MCF 10A (cell line): ENCODE measurements at regions of chr9 and their contacts with region 1.

Region 1: DNA sequence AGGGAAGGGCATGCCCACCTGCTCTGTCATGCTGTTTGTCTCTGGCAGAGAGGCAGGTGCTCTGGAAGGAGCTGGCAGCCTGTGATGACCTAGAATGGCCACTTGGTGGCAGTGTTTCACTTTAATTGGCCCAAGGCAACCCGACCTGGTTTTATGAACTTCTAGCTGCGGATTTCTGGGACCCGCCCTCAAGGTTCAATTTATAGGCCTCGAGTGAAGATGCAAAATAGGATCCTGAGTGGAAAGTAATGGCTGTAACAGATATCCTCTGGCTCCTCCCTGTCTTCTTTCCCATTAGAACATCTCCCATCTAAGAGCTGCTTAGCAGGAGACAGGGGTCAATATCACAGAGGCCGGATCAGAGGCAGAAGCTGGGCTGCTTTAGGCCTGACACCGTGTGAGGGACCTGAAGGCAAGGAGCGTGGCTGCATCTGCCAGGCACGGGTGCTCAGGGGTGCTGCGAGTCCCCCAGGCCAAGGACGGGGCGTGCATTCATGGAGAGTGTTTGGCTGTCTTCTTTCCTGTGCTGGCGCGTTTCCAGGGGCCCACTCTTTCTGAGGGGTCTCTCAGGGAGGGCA is 56.7 kb upstream of the SLC28A3 start:
- DNase-seq: peak; percentile 78
- H3K4me3 Mint-ChIP-seq: no peak overlapping the region
- H3K27ac Mint-ChIP-seq: no peak overlapping the region
- H3K4me1 Mint-ChIP-seq: no peaks in the 10 kb centered on the region
- H3K27me3 Mint-ChIP-seq: no peaks in the 10 kb centered on the region
- CTCF ChIP-seq: peak; percentile 87

Region 2: GRCh38 chr9:84463272-84463671 is 66.0 kb after region 1 on chr9:
- CTCF ChIA-PET with region 1: interaction called, 3 read pairs
- POLR2A ChIA-PET with region 1: interaction called, 3 read pairs
- intact Hi-C with region 1: loop called (anchors 1 kb)
- DNase-seq: no peak
- H3K4me3 Mint-ChIP-seq: no peak overlapping the region
- H3K27ac Mint-ChIP-seq: no peak overlapping the region
- H3K4me1 Mint-ChIP-seq: no peaks in the 10 kb centered on the region
- H3K27me3 Mint-ChIP-seq: no peaks in the 10 kb centered on the region
- CTCF ChIP-seq: no peak

Region 3: DNA sequence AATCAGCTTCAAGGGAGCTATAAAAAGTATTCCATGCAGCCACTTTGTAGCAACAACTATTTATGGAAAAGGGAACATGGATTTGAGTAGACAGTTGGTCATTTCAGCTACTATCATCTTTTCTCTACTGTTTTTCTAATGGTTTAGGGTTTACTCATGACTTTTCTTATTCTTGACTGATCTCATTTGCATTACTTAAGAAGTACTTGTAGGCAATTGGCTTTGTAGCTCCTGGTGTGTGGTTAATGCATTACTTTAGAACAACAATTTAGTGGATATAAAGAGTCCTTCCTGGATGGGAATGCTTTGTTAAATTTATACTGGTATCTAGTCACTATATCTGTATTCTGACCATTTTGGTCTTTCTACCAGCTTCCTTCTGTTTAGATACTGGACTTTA is 212.5 kb after region 1 on chr9:
- CTCF ChIA-PET with region 1: no interaction called
- POLR2A ChIA-PET with region 1: no interaction called
- intact Hi-C with region 1: no loop called
- DNase-seq: no peak
- H3K4me3 Mint-ChIP-seq: no peak overlapping the region
- H3K27ac Mint-ChIP-seq: no peak overlapping the region
- H3K4me1 Mint-ChIP-seq: no peaks in the 10 kb centered on the region
- H3K27me3 Mint-ChIP-seq: peaks cover 9% of the 10 kb centered on the region
- CTCF ChIP-seq: no peak

Region 4: DNA sequence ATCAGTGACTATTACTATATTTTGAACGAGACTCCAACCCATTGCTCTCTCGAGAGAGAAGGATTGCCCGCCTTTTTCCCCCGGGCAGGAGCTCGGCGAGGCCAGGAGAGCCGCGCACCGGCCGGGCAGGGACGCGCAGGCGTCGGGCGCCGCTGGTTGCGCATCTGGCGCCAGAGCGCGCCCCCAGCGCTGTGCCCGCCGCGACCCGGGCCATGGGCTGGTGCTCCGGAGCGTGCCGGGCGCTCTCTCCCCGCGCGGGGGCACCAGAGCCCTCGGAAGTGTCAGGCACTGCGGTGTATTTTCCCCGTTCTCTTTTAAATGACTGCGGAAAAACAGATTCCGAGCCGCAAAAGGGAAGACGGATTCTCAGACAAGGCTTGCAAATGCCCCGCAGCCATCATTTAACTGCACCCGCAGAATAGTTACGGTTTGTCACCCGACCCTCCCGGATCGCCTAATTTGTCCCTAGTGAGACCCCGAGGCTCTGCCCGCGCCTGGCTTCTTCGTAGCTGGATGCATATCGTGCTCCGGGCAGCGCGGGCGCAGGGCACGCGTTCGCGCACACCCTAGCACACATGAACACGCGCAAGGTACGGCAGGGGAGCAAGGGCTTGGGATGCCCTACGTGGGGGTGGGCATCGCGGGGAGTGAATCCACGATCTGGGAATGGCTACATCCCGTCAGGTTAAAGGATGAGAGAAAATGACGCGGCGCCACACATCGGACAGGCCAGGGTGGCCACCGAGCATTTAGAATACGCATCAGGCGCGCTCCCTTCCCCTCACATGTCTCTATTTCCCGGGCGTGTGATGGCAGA is 271.2 kb after region 1 on chr9:
- CTCF ChIA-PET with region 1: interaction called, 13 read pairs
- POLR2A ChIA-PET with region 1: interaction called, 3 read pairs
- intact Hi-C with region 1: loop called (anchors 1 kb)
- DNase-seq: peak; percentile 59
- H3K4me3 Mint-ChIP-seq: peak overlapping the region; percentile 80
- H3K27ac Mint-ChIP-seq: no peak overlapping the region
- H3K4me1 Mint-ChIP-seq: peaks cover 14% of the 10 kb centered on the region
- H3K27me3 Mint-ChIP-seq: peaks cover 25% of the 10 kb centered on the region
- CTCF ChIP-seq: peak; percentile 50

Region 5: GRCh38 chr9:84781458-84781857 is 384.2 kb after region 1 on chr9:
- CTCF ChIA-PET with region 1: interaction called, 11 read pairs
- POLR2A ChIA-PET with region 1: no interaction called
- intact Hi-C with region 1: loop called (anchors 1 kb)
- DNase-seq: peak; percentile 40
- H3K4me3 Mint-ChIP-seq: no peak overlapping the region
- H3K27ac Mint-ChIP-seq: no peak overlapping the region
- H3K4me1 Mint-ChIP-seq: no peaks in the 10 kb centered on the region
- H3K27me3 Mint-ChIP-seq: peaks cover 13% of the 10 kb centered on the region
- CTCF ChIP-seq: peak; percentile 50

Region 6: GRCh38 chr9:84953797-84954705 is 556.8 kb after region 1 on chr9:
- CTCF ChIA-PET with region 1: interaction called, 7 read pairs
- POLR2A ChIA-PET with region 1: interaction called, 3 read pairs
- intact Hi-C with region 1: loop called (anchors 1 kb)
- DNase-seq: peak; percentile 75
- H3K4me3 Mint-ChIP-seq: no peak overlapping the region
- H3K27ac Mint-ChIP-seq: no peak overlapping the region
- H3K4me1 Mint-ChIP-seq: peaks cover 7% of the 10 kb centered on the region
- H3K27me3 Mint-ChIP-seq: no peaks in the 10 kb centered on the region
- CTCF ChIP-seq: peak; percentile 90

Region 7: DNA sequence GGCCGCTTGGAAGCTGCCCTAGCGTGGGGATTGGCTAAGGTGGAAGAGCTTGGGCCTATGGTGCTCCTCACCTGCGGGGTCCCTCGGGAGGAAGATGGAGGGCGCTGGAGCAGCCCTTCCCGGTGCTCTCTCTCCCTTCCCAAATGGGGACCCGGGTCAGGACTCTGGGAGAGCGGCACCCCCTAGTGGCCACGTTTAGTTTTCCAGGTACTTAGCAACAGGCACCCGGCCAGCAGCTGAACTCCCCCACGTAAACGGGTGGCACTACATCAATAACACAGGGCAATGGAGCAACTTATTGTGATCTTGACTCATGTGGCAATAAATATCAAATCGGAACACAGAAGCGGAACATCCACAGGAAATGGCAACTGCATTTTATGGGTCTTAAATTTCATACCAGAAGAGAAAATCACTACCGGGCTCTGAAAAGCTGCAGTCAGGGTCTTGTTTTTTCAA is 1027.9 kb after region 1 on chr9:
- CTCF ChIA-PET with region 1: interaction called, 7 read pairs
- POLR2A ChIA-PET with region 1: interaction called, 3 read pairs
- intact Hi-C with region 1: loop called (anchors 1 kb)
- DNase-seq: peak; percentile 72
- H3K4me3 Mint-ChIP-seq: no peak overlapping the region
- H3K27ac Mint-ChIP-seq: no peak overlapping the region
- H3K4me1 Mint-ChIP-seq: peaks cover 5% of the 10 kb centered on the region
- H3K27me3 Mint-ChIP-seq: peaks cover 17% of the 10 kb centered on the region
- CTCF ChIP-seq: peak; percentile 78